Colonic mucosa (tissue), 4 donors: ENCODE measurements at regions of chr12 and their contacts with region 1.

Region 1: GRCh38 chr12:129911428-129912049 is 7.7 kb upstream of the TMEM132D start:
- DNase-seq: peak; percentile 30
- H3K4me3 ChIP-seq: no peak overlapping the region
- H3K27ac ChIP-seq: no peak overlapping the region
- H3K4me1 ChIP-seq: no peaks in the 10 kb centered on the region
- H3K27me3 ChIP-seq: no peaks in the 10 kb centered on the region
- CTCF ChIP-seq: peak; percentile 72

Region 2: DNA sequence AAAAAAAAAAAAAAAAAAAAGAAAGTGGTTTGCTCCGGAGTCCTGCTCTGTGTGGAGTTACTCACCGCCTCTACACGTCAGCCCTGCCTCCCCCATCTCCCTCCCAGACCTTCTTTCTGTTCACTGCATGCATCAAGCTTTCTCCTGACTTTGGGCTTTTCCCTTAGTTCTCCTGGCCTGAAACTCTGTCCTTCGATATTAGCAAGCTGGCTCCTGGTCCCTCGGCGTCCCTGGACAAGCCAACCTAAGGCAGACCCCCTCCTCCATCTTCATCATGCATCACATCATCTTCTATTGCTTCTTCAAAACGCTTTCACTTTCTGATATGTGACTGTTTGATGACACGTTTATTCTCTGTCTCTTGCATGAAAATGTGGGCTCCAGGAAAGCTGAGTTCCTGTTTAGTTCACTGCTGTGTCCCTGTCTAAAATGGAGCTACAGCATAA is 1128.4 kb before region 1 on chr12:
- intact Hi-C with region 1: loop called (anchors 5 kb)
- DNase-seq: no peak
- H3K4me3 ChIP-seq: no peak overlapping the region
- H3K27ac ChIP-seq: no peak overlapping the region
- H3K4me1 ChIP-seq: no peaks in the 10 kb centered on the region
- H3K27me3 ChIP-seq: no peaks in the 10 kb centered on the region
- CTCF ChIP-seq: no peak

Region 3: DNA sequence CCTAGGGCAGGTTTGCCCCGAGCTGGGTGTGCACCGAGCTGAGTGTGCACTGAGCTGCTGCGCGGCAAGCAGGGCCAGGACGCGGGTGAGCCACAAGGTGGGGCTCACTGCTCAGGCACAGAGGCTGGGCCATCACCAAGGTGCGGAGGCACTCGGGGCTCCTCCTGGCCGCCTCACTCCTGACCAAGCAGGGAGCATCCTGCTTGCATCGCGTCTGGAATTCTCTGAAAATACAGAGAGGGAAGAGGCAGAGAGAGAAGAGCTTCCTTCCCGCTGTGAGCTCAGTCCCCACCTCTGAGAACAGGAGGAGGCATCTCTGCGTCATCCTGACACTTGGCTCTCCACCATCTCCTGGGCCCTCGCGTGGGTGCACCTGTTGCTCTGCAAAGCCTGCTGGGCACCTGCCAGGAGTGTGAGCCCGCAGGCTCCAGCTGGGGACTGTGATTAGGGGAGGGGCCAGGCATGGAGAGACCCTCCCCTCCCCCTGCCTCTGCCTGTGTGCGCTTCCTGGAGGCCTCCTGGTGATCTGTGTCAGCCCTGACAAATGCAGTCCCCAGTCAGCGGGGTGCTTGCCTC is 942.0 kb before region 1 on chr12:
- intact Hi-C with region 1: loop called (anchors 5 kb)
- DNase-seq: no peak
- H3K4me3 ChIP-seq: no peak overlapping the region
- H3K27ac ChIP-seq: no peak overlapping the region
- H3K4me1 ChIP-seq: no peaks in the 10 kb centered on the region
- H3K27me3 ChIP-seq: no peaks in the 10 kb centered on the region
- CTCF ChIP-seq: peak; percentile 31